CD8-positive, alpha-beta T cell (primary cell): ENCODE measurements at regions of chr3 and their contacts with region 1.

Region 1: DNA sequence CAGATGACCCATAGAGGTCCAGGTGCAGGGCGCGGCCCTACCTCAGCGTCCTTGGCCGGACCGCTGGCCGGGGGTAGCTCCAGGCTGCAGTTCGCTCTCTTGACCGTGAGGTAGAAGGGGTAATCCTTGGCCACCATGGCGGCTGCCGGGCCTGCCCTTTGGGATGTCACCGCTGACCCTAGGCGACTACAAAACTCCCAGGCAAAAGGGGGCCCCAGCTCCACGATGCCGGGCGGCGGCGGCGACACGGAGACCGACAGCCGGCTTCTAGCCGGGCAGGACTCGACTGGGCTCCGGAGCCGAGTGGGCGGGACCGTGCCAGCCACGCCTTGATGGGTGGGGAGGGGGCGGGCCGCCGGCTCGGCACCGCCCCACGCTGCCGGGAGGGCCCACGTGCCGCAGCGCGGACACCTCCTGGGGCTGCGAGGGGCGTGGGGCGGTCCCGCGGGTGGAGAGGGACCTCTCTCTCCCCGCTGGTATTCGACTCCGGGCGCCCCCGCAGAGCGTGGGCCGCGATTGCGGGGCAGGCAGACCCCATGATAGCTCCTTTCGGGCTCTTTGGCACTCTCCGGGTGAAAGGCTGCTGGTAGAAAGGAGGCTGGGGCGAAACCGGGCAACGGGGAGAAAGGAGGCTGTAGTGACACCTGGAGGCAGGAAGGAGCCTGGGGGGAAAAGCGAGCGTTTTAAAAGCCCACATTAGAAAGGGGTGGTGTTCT is at the start of gene ARHGEF3:
- DNase-seq: peak; percentile 82 to 96 (median 87)
- ATAC-seq: peak; percentile 82
- H3K4me3 ChIP-seq: peak within 1 kb of the TSS; percentile 98 to 99
- H3K4me3 Mint-ChIP-seq: peak within 1 kb of the TSS; percentile 95
- H3K27ac ChIP-seq: peak within 1 kb of the TSS; percentile 71 to 85
- H3K27ac Mint-ChIP-seq: peak within 1 kb of the TSS; percentile 93
- H3K4me1 ChIP-seq: peaks cover 23% of the 10 kb centered on the region
- H3K4me1 Mint-ChIP-seq: peaks cover 37% of the 10 kb centered on the region
- H3K27me3 ChIP-seq: no peaks in the 10 kb centered on the region
- H3K27me3 Mint-ChIP-seq: no peaks in the 10 kb centered on the region
- CTCF ChIP-seq: peak; percentile 56
- total RNA-seq, gene ARHGEF3: 38.8 to 39.9 TPM

Region 2: DNA sequence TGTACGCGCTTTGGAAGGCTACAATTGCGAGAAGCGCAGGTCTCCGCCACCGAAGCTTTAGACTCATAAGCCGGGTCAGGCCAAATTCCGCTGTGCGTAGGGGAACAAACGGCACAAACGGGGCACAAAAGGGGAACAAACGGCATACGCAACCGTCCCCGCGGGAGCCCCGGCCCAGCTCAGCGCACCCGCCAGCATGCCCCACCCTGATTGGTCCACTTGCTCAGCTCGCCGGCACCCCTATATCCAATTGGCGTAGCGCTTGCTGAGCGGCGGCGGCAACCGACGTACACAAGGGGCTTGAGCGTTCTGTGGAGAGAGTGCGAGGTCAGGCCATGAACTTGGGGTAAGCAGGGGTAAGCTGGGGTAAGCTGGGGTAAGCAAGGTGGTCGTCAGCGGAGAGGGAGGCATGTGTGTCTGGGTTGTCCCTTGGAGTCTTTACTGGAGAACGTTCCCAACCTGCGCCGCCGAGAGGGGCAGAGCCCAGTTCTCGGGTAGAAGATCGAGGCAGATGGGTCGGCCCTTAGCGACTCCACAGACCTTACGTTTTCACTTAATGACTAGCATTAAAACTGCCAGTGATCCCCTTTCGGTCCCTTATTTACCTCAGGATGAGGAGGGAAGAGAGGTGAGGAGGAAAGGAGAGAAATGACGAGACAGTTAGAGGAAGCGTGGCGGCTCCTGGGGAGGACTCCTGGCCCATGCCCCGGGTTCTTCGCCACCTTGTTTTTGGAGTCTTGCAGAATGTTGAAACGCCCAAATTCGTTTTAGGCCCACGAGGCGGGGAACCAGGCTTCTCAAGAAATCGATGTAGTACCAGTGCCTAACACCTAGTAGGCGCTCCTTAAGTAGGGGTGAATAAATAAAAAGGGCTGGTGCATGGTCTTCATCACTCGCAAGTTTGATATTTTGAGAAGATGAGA is 244.7 kb before region 1 on chr3 and contains the start of gene CCDC66:
- CTCF ChIA-PET with region 1: no interaction called
- POLR2A ChIA-PET with region 1: interaction called, 4 read pairs
- intact Hi-C with region 1: loop called (anchors 1 to 2 kb)
- DNase-seq: peak; percentile 88 to 96 (median 94)
- ATAC-seq: peak; percentile 89
- H3K4me3 ChIP-seq: peak within 1 kb of the TSS; percentile 70 to 78
- H3K4me3 Mint-ChIP-seq: peak within 1 kb of the TSS; percentile 100
- H3K27ac ChIP-seq: peak within 1 kb of the TSS; percentile 91 to 93
- H3K27ac Mint-ChIP-seq: peak within 1 kb of the TSS; percentile 100
- H3K4me1 ChIP-seq: peaks cover 22% of the 10 kb centered on the region
- H3K4me1 Mint-ChIP-seq: peaks cover 32% of the 10 kb centered on the region
- H3K27me3 ChIP-seq: no peaks in the 10 kb centered on the region
- H3K27me3 Mint-ChIP-seq: no peaks in the 10 kb centered on the region
- CTCF ChIP-seq: peak; percentile 83
- total RNA-seq, gene CCDC66: 63.9 to 65.4 TPM

Region 3: GRCh38 chr3:56725175-56725574 is 76.6 kb before region 1 on chr3:
- CTCF ChIA-PET with region 1: interaction called, 44 read pairs
- POLR2A ChIA-PET with region 1: interaction called, 33 read pairs
- intact Hi-C with region 1: no loop called
- DNase-seq: peak; percentile 25 to 86 (median 66)
- ATAC-seq: peak; percentile 89
- H3K4me3 ChIP-seq: no peak overlapping the region
- H3K4me3 Mint-ChIP-seq: peak overlapping the region; percentile 65
- H3K27ac ChIP-seq: peak overlapping the region in 1 of 2 experiments; percentile 43
- H3K27ac Mint-ChIP-seq: peak overlapping the region; percentile 92
- H3K4me1 ChIP-seq: peaks cover 46% of the 10 kb centered on the region
- H3K4me1 Mint-ChIP-seq: peaks cover 64% of the 10 kb centered on the region
- H3K27me3 ChIP-seq: no peaks in the 10 kb centered on the region
- H3K27me3 Mint-ChIP-seq: no peaks in the 10 kb centered on the region
- CTCF ChIP-seq: no peak

Region 4: DNA sequence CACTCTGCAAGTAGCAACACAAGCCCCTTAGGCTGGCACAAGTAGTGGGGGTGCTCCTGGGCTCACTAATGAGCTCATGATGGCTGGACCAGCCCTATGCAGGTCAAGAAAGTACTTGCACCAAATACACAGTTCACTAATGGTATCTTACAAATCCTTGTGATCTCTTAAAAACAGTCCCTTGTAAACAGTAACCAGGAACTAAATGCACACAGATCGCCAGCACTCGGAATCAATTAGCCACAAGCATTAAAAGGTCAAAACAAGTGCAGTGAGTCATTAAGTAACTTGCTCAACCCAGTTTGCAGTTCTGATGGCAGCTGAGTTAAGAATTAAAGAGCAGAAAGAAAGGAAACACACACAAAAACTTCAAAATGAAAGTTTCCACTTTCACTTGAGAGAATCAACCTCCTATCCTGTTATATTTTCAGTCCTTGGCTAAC is 43.3 kb before region 1 on chr3:
- CTCF ChIA-PET with region 1: interaction called, 146 read pairs
- POLR2A ChIA-PET with region 1: interaction called, 65 read pairs
- intact Hi-C with region 1: loop called (anchors 1 kb)
- DNase-seq: peak in 8 of 9 experiments; percentile 17 to 58 (median 35)
- ATAC-seq: peak; percentile 53
- H3K4me3 ChIP-seq: no peak overlapping the region
- H3K4me3 Mint-ChIP-seq: peak overlapping the region; percentile 48
- H3K27ac ChIP-seq: peak overlapping the region; percentile 41 to 70
- H3K27ac Mint-ChIP-seq: peak overlapping the region; percentile 90
- H3K4me1 ChIP-seq: peaks cover 72% of the 10 kb centered on the region
- H3K4me1 Mint-ChIP-seq: peaks cover 82% of the 10 kb centered on the region
- H3K27me3 ChIP-seq: no peaks in the 10 kb centered on the region
- H3K27me3 Mint-ChIP-seq: no peaks in the 10 kb centered on the region
- CTCF ChIP-seq: no peak

Region 5: GRCh38 chr3:56790016-56790821 is 11.6 kb before region 1 on chr3:
- CTCF ChIA-PET with region 1: interaction called, 117 read pairs
- POLR2A ChIA-PET with region 1: interaction called, 182 read pairs
- intact Hi-C with region 1: loop called (anchors 1 kb)
- DNase-seq: peak in 6 of 9 experiments; percentile 36 to 84 (median 55)
- ATAC-seq: peak; percentile 57
- H3K4me3 ChIP-seq: peak overlapping the region in 1 of 2 experiments; percentile 19
- H3K4me3 Mint-ChIP-seq: peak overlapping the region; percentile 58
- H3K27ac ChIP-seq: peak overlapping the region; percentile 46 to 80
- H3K27ac Mint-ChIP-seq: peak overlapping the region; percentile 88
- H3K4me1 ChIP-seq: peaks cover 93% of the 10 kb centered on the region
- H3K4me1 Mint-ChIP-seq: peaks cover 90% of the 10 kb centered on the region
- H3K27me3 ChIP-seq: no peaks in the 10 kb centered on the region
- H3K27me3 Mint-ChIP-seq: no peaks in the 10 kb centered on the region
- CTCF ChIP-seq: no peak

Region 6: DNA sequence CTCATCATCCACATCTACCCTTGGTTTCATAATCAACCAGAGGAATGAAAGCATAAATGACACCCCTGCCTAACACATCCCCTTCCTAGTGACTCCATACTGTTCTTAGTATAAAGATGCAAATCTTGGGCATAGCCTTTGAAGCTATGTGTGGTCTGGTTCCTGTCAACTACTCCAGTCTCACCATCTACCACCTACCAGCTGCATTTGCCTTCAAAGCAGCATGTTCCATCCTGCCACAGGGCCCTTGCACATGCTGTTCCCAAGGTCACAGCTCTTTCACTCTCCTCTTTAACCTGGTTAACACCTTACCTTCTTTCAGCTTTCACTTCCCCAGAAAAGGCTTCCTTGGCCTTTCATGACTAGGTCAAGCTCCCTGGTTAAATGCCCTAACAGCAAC is 62.3 kb after region 1 on chr3:
- CTCF ChIA-PET with region 1: no interaction called
- POLR2A ChIA-PET with region 1: no interaction called
- intact Hi-C with region 1: no loop called
- DNase-seq: no peak
- ATAC-seq: no peak
- H3K4me3 ChIP-seq: no peak overlapping the region
- H3K4me3 Mint-ChIP-seq: no peak overlapping the region
- H3K27ac ChIP-seq: no peak overlapping the region
- H3K27ac Mint-ChIP-seq: peak overlapping the region; percentile 15
- H3K4me1 ChIP-seq: peaks cover 39% of the 10 kb centered on the region
- H3K4me1 Mint-ChIP-seq: peaks cover 59% of the 10 kb centered on the region
- H3K27me3 ChIP-seq: no peaks in the 10 kb centered on the region
- H3K27me3 Mint-ChIP-seq: no peaks in the 10 kb centered on the region
- CTCF ChIP-seq: no peak

Region 7: GRCh38 chr3:56923521-56924224 is 121.9 kb after region 1 on chr3:
- CTCF ChIA-PET with region 1: interaction called, 37 read pairs
- POLR2A ChIA-PET with region 1: interaction called, 8 read pairs
- intact Hi-C with region 1: loop called in 1 of 2 experiments (anchors 2 kb)
- DNase-seq: peak in 8 of 9 experiments; percentile 27 to 89 (median 60)
- ATAC-seq: peak; percentile 80
- H3K4me3 ChIP-seq: peak overlapping the region in 1 of 2 experiments; percentile 11
- H3K4me3 Mint-ChIP-seq: peak overlapping the region; percentile 55
- H3K27ac ChIP-seq: peak overlapping the region; percentile 55 to 89
- H3K27ac Mint-ChIP-seq: peak overlapping the region; percentile 91
- H3K4me1 ChIP-seq: peaks cover 86% of the 10 kb centered on the region
- H3K4me1 Mint-ChIP-seq: peaks cover 81% of the 10 kb centered on the region
- H3K27me3 ChIP-seq: no peaks in the 10 kb centered on the region
- H3K27me3 Mint-ChIP-seq: no peaks in the 10 kb centered on the region
- CTCF ChIP-seq: no peak

Region 8: DNA sequence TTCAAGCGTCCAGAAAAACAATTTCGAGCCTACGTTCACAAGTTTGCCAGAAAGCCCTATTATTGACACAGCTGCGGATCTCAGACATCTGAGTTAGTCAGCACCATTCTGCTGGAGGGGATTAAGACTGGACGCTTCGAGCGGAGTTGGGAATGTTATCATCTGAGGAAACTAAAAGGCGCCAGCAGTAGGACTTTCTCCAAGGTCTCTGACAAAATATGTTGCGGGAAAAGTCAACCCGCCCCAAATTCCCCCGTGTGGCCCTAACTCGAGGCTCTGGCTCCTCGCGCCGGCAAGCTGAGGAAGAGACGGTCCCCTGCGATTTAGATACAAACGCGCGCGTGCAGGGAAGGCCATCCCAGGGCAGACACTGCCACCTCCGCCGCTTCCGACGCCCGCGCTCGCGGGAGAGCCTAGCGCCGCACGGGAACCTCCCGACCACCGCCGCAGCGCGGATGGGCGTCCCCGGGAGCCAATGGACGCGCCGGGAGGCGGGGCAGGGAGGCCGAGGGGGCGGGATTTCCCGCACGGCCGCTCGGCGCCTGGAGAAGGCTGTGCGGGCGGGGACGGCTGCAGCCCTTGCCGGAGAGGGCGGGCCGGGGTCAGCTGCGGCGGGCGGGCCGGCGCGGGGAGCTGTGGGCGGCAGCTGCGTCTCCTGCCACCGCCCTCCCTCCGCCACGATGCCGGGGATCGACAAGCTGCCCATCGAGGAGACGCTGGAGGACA is 425.5 kb after region 1 on chr3 and contains the start of gene APPL1:
- CTCF ChIA-PET with region 1: no interaction called
- POLR2A ChIA-PET with region 1: no interaction called
- intact Hi-C with region 1: loop called in 1 of 2 experiments (anchors 5 kb)
- DNase-seq: peak; percentile 68 to 93 (median 87)
- ATAC-seq: peak; percentile 89
- H3K4me3 ChIP-seq: peak within 1 kb of the TSS; percentile 82 to 91
- H3K4me3 Mint-ChIP-seq: peak within 1 kb of the TSS; percentile 93
- H3K27ac ChIP-seq: peak within 1 kb of the TSS; percentile 48 to 68
- H3K27ac Mint-ChIP-seq: peak within 1 kb of the TSS; percentile 89
- H3K4me1 ChIP-seq: peaks cover 11% of the 10 kb centered on the region
- H3K4me1 Mint-ChIP-seq: peaks cover 30% of the 10 kb centered on the region
- H3K27me3 ChIP-seq: no peaks in the 10 kb centered on the region
- H3K27me3 Mint-ChIP-seq: no peaks in the 10 kb centered on the region
- CTCF ChIP-seq: no peak
- total RNA-seq, gene APPL1: 19.3 to 23.4 TPM

Region 9: GRCh38 chr3:58783845-58784244 is 1982.0 kb after region 1 on chr3:
- CTCF ChIA-PET with region 1: no interaction called
- POLR2A ChIA-PET with region 1: no interaction called
- intact Hi-C with region 1: no loop called
- DNase-seq: no peak
- ATAC-seq: no peak
- H3K4me3 ChIP-seq: no peak overlapping the region
- H3K4me3 Mint-ChIP-seq: no peak overlapping the region
- H3K27ac ChIP-seq: no peak overlapping the region
- H3K27ac Mint-ChIP-seq: no peak overlapping the region
- H3K4me1 ChIP-seq: no peaks in the 10 kb centered on the region
- H3K4me1 Mint-ChIP-seq: no peaks in the 10 kb centered on the region
- H3K27me3 ChIP-seq: no peaks in the 10 kb centered on the region
- H3K27me3 Mint-ChIP-seq: no peaks in the 10 kb centered on the region
- CTCF ChIP-seq: no peak